Activated naive CD4-positive, alpha-beta T cell treated with anti-CD3 and anti-CD28 coated beads, Interleukin-2, amount 10 ng/mL, durations not matched to agents 7 days and 5 days (primary cell): ENCODE measurements at regions of chr9 and their contacts with region 1.

Region 1: DNA sequence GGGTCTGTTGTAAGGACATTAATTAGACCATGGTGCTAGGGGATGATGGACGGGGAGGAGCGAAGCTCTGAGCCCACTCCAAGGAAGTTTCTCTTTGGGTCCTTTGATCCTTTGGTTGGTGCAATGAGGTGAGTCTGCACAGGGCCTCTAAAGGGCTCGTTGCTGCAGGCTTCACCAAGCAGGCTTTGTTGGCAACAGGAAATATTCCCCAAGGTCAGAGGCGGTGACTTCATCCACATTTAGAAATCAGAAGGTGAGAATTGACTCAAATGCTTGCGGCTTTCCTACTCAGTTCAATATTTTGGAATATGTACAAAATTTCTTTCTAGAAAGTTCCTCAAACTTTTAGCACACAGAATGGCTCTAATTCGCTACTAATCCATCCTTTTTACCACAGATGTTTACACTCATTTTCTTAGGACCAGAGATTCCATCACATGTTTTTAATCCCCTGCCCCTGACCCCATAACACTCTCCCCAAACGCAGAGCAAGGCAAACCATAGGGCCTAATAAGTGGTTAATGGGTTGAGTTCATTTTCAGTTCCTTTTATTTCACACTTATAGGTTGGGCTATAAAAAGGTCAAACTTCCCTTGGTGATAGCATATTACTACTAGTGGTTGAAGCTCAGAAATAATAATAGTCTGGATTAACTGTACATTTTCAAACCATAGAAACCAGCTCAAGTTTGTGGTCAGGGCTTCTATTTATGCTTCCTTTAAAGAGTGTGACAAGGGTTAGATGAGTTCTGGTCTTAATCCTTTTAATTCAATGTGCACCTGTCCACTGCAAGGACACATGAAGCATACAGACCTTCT is 37.3 kb upstream of the TMEM252 start:
- DNase-seq: no peak
- H3K4me3 Mint-ChIP-seq: no peak overlapping the region
- H3K27ac Mint-ChIP-seq: no peak overlapping the region
- H3K4me1 Mint-ChIP-seq: no peaks in the 10 kb centered on the region
- H3K27me3 Mint-ChIP-seq: no peaks in the 10 kb centered on the region

Region 2: DNA sequence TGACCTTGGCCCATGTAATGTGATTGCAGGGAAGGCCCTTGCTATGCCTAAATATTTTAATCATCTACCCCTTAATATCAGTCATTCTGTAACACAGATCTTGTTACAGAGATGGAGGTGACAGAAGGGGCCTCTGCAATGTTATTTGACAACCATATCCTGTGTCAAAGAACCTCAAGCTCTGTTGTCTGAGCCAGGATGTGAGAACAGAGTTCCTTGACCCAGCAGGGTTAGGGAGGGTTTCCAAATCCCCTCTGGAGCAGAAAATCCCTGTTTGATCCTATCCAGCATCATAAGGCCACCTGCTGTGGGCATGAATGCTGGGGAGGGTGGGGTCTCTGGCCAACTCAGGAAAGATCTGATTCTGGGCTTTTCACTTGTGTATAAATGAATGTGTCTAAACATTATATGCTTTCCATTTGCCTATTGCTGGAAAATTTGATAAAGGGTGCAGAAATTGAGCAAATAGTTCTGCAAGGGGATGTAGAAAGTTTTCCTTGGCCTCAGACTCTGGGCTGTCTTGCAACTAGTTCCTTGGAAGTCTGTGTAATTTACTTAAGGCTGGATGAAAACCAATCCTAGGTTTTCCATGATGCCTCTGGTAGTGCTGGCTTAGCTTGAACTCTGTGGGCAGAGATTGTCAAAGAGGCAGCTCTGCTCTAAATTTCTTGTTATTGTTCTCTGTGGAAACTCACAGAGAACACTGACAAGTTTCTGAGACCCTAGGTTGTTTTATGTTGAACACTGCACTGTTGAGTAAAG is 150.6 kb before region 1 on chr9:
- CTCF ChIA-PET with region 1: no interaction called
- DNase-seq: no peak
- H3K4me3 Mint-ChIP-seq: no peak overlapping the region
- H3K27ac Mint-ChIP-seq: no peak overlapping the region
- H3K4me1 Mint-ChIP-seq: no peaks in the 10 kb centered on the region
- H3K27me3 Mint-ChIP-seq: peaks cover 8% of the 10 kb centered on the region

Region 3: GRCh38 chr9:68515326-68515901 is 62.6 kb before region 1 on chr9:
- CTCF ChIA-PET with region 1: no interaction called
- DNase-seq: no peak
- H3K4me3 Mint-ChIP-seq: no peak overlapping the region
- H3K27ac Mint-ChIP-seq: no peak overlapping the region
- H3K4me1 Mint-ChIP-seq: no peaks in the 10 kb centered on the region
- H3K27me3 Mint-ChIP-seq: peaks cover 4% of the 10 kb centered on the region

Region 4: GRCh38 chr9:68546596-68547390 is 31.2 kb before region 1 on chr9:
- CTCF ChIA-PET with region 1: no interaction called
- DNase-seq: no peak
- H3K4me3 Mint-ChIP-seq: no peak overlapping the region
- H3K27ac Mint-ChIP-seq: peak overlapping the region; percentile 43
- H3K4me1 Mint-ChIP-seq: peaks cover 10% of the 10 kb centered on the region
- H3K27me3 Mint-ChIP-seq: peaks cover 14% of the 10 kb centered on the region

Region 5: GRCh38 chr9:68560071-68560844 is 17.7 kb before region 1 on chr9:
- CTCF ChIA-PET with region 1: interaction called, 10 read pairs
- DNase-seq: peak; percentile 66
- H3K4me3 Mint-ChIP-seq: no peak overlapping the region
- H3K27ac Mint-ChIP-seq: no peak overlapping the region
- H3K4me1 Mint-ChIP-seq: peaks cover 12% of the 10 kb centered on the region
- H3K27me3 Mint-ChIP-seq: peaks cover 23% of the 10 kb centered on the region

Region 6: DNA sequence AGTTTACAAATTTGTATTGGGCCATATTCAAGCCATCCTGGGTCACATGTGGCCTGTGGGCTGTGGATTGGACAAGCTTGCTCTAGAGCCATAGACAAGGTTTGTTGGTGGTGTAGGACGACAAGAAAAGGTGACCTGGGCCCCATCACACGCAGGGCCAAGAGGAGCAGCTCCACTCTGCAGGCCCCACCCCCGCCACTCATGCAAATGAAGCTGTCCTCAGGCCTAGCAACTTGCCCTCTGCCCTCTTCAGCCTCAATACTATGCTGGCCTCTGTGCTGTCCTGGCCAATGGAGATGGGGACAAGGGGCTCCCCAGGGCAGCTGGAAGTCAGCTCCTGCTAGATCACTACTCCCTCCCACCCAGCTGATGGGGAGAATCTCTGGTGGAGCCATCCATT is 17.9 kb after region 1 on chr9:
- CTCF ChIA-PET with region 1: no interaction called
- DNase-seq: no peak
- H3K4me3 Mint-ChIP-seq: no peak overlapping the region
- H3K27ac Mint-ChIP-seq: no peak overlapping the region
- H3K4me1 Mint-ChIP-seq: no peaks in the 10 kb centered on the region
- H3K27me3 Mint-ChIP-seq: no peaks in the 10 kb centered on the region